Ascending aorta (tissue), 2 donors: ENCODE measurements at regions of chr12 and their contacts with region 1.

Region 1: DNA sequence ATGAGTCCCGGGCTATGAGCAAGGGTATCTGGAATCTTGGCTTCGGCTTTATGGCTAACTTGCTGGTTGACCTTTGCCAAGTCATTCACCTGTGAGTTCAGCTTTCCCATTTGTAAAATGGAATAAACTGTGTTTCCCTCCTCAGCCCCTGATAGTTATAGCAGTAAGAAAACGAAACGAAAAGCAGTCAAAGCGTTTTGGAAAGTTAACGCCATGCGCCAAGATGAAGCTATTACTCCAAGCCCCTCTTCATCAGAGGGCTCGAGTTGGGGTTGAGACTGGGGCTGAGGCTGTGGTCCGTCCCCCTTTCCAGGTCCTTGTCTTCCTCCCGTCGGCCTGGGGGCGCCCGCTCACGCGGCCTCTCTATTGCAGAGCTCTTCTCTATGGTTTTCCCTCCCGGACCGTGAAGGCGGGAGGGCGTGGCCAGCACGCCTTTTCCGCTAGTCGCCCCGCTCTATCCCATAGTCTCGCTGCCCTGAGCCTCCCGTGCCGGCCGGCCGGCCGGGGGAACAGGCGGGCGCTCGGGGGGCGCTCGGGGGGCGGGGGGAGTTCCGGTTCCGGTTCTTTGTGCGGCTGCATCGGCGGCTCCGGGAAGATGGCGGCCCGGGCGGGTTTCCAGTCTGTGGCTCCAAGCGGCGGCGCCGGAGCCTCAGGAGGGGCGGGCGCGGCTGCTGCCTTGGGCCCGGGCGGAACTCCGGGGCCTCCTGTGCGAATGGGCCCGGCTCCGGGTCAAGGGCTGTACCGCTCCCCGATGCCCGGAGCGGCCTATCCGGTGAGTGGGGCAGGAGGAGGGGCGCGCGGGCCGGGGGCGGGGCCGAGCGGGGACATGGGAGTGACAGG is at the start of gene SMARCD1:
- DNase-seq: peak; percentile 66 to 94
- H3K4me3 ChIP-seq: peak within 1 kb of the TSS; percentile 83 to 85
- H3K27ac ChIP-seq: peak within 1 kb of the TSS; percentile 97 to 98
- H3K4me1 ChIP-seq: peaks cover 3 to 9% of the 10 kb centered on the region in 2 donors
- H3K27me3 ChIP-seq: no peaks in the 10 kb centered on the region
- CTCF ChIP-seq: peak in 2 of 3 experiments; percentile 49 to 62
- total RNA-seq, gene SMARCD1: 277 TPM

Region 2: GRCh38 chr12:50111693-50112455 is 26.9 kb after region 1 on chr12 and contains the start of gene COX14:
- intact Hi-C with region 1: loop called (anchors 1 kb)
- DNase-seq: peak; percentile 98 to 100
- H3K4me3 ChIP-seq: peak within 1 kb of the TSS; percentile 83 to 94
- H3K27ac ChIP-seq: peak within 1 kb of the TSS; percentile 96 to 98
- H3K4me1 ChIP-seq: peaks cover 22 to 40% of the 10 kb centered on the region in 2 donors
- H3K27me3 ChIP-seq: no peaks in the 10 kb centered on the region
- CTCF ChIP-seq: peak in 2 of 3 experiments; percentile 97 to 98
- total RNA-seq, gene COX14: 19.8 TPM

Region 3: GRCh38 chr12:50174971-50175715 is 90.1 kb after region 1 on chr12:
- intact Hi-C with region 1: loop called (anchors 1 kb)
- DNase-seq: no peak
- H3K4me3 ChIP-seq: no peak overlapping the region
- H3K27ac ChIP-seq: no peak overlapping the region
- H3K4me1 ChIP-seq: no peaks in the 10 kb centered on the region
- H3K27me3 ChIP-seq: no peaks in the 10 kb centered on the region
- CTCF ChIP-seq: peak; percentile 51 to 73 (median 72)

Region 4: GRCh38 chr12:50400598-50401364 is 315.8 kb after region 1 on chr12 and contains the start of gene LARP4:
- intact Hi-C with region 1: loop called (anchors 2 kb)
- DNase-seq: peak; percentile 76 to 95
- H3K4me3 ChIP-seq: peak within 1 kb of the TSS; percentile 76 to 80
- H3K27ac ChIP-seq: peak within 1 kb of the TSS; percentile 86 to 91
- H3K4me1 ChIP-seq: peaks cover 0 to 12% of the 10 kb centered on the region in 2 donors
- H3K27me3 ChIP-seq: no peaks in the 10 kb centered on the region
- CTCF ChIP-seq: peak in 1 of 3 experiments; percentile 7
- total RNA-seq, gene LARP4: 45.7 TPM